Breast epithelium (tissue), 4 donors: ENCODE measurements at regions of chrX and their contacts with region 1.

Region 1: GRCh38 chrX:110412971-110413721 is 54.5 kb downstream of the RTL9 start:
- DNase-seq: peak; percentile 30 to 62
- H3K4me3 ChIP-seq: peak overlapping the region in 1 of 3 donors; percentile 6
- H3K27ac ChIP-seq: no peak overlapping the region
- H3K4me1 ChIP-seq: no peaks in the 10 kb centered on the region
- H3K27me3 ChIP-seq: peaks cover 0 to 89% of the 10 kb centered on the region in 2 donors
- CTCF ChIP-seq: peak; percentile 61 to 73 (median 71)
- POLR2A ChIP-seq: no peak

Region 2: GRCh38 chrX:109252789-109253188 is 1160.4 kb before region 1 on chrX:
- intact Hi-C with region 1: no loop called
- DNase-seq: no peak
- H3K4me3 ChIP-seq: no peak overlapping the region
- H3K27ac ChIP-seq: no peak overlapping the region
- H3K4me1 ChIP-seq: no peaks in the 10 kb centered on the region
- H3K27me3 ChIP-seq: peaks cover 0 to 12% of the 10 kb centered on the region in 2 donors
- CTCF ChIP-seq: no peak
- POLR2A ChIP-seq: no peak

Region 3: DNA sequence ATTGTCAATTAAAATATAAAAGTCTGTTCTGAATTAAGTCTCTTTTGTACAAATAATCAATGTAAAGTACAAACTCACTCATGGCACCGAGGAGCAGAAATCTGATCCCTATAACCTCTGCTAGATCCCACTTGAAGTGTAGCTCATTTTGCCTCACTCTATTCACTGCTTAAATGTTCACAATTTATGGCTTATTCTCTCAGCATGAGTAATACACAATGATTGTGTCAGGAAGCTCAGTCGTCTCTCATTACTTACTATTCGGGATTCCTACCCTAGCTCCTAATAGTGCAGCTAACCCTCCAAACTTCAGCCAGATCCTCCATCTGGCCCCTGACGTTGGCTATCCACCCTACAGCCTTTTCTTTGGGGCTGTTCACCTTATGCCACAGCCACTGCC is 90.5 kb before region 1 on chrX:
- intact Hi-C with region 1: loop called (anchors 5 kb)
- DNase-seq: no peak
- H3K4me3 ChIP-seq: no peak overlapping the region
- H3K27ac ChIP-seq: no peak overlapping the region
- H3K4me1 ChIP-seq: no peaks in the 10 kb centered on the region
- H3K27me3 ChIP-seq: peaks cover 0 to 24% of the 10 kb centered on the region in 2 donors
- CTCF ChIP-seq: no peak
- POLR2A ChIP-seq: no peak